CD8-positive, alpha-beta T cell (primary cell): ENCODE measurements at regions of chr7 and their contacts with region 1.

Region 1: DNA sequence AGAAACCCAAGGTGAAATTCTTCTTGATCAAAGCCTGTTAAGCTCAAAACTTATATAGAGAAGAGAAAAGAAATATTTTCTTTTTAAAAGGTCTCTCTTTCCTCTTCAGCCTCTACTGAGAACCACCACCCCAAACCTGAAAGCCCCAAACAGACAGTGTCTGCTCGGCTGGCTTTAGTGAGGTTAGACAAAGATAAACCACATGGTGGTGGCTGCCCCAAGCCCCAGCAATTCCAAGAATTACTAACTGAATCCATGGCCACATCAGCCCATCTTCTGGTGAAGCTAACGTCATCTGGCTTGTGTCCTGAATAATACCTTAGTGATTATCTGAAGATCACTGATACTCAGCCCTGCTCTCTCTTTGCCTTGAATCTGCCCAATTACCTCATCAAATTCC is 275.0 kb downstream of the ELMO1 start:
- DNase-seq: no peak
- ATAC-seq: no peak
- H3K4me3 ChIP-seq: no peak overlapping the region
- H3K4me3 Mint-ChIP-seq: no peak overlapping the region
- H3K27ac ChIP-seq: no peak overlapping the region
- H3K27ac Mint-ChIP-seq: no peak overlapping the region
- H3K4me1 ChIP-seq: no peaks in the 10 kb centered on the region
- H3K4me1 Mint-ChIP-seq: no peaks in the 10 kb centered on the region
- H3K27me3 ChIP-seq: no peaks in the 10 kb centered on the region
- H3K27me3 Mint-ChIP-seq: no peaks in the 10 kb centered on the region
- CTCF ChIP-seq: no peak

Region 2: DNA sequence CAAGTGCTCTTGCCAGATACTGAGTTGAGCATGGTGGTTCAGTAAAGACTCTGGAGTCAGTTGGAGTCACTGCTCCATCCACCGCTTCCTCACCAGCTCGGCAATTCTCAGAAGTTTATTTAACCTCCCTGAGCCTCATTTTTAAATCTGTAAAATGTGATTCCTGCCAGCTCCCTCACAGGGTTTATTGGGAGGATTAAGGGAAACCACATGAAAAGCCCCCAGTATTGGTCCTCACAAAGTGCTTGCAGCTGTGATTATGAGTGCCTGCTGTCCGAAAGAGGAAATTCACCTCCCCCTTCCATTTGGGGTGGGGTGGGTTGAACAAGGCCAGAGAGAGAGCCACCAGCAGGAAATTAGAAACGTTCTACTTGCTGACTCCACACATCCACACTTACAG is 548.4 kb before region 1 on chr7:
- CTCF ChIA-PET with region 1: no interaction called
- POLR2A ChIA-PET with region 1: no interaction called
- intact Hi-C with region 1: loop called in 1 of 2 experiments (anchors 5 kb)
- DNase-seq: no peak
- ATAC-seq: no peak
- H3K4me3 ChIP-seq: no peak overlapping the region
- H3K4me3 Mint-ChIP-seq: no peak overlapping the region
- H3K27ac ChIP-seq: peak overlapping the region in 1 of 2 experiments; percentile 58
- H3K27ac Mint-ChIP-seq: peak overlapping the region; percentile 46
- H3K4me1 ChIP-seq: peaks cover 8% of the 10 kb centered on the region
- H3K4me1 Mint-ChIP-seq: peaks cover 42% of the 10 kb centered on the region
- H3K27me3 ChIP-seq: no peaks in the 10 kb centered on the region
- H3K27me3 Mint-ChIP-seq: no peaks in the 10 kb centered on the region
- CTCF ChIP-seq: no peak

Region 3: DNA sequence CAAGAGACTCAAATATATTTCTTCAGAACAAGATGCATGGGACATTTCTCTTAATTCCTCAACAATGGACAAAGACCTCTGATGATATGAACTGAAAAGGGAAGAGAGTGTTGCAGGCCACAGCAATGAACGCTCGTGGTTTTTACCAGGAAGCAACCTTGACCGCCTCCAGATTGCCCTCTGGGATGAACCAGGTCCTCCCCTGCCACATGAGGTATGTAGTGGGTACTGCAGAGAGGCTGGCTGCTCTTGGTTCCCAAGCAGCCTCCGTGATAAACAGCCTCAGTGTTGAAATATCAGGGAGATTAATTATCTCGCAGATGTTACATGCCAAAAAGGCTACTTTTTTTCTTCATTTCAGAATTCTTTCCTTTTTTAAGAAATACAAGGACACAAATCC is 63.8 kb before region 1 on chr7:
- CTCF ChIA-PET with region 1: no interaction called
- POLR2A ChIA-PET with region 1: interaction called, 3 read pairs
- intact Hi-C with region 1: loop called in 1 of 2 experiments (anchors 10 kb)
- DNase-seq: no peak
- ATAC-seq: no peak
- H3K4me3 ChIP-seq: no peak overlapping the region
- H3K4me3 Mint-ChIP-seq: no peak overlapping the region
- H3K27ac ChIP-seq: no peak overlapping the region
- H3K27ac Mint-ChIP-seq: no peak overlapping the region
- H3K4me1 ChIP-seq: no peaks in the 10 kb centered on the region
- H3K4me1 Mint-ChIP-seq: peaks cover 46% of the 10 kb centered on the region
- H3K27me3 ChIP-seq: no peaks in the 10 kb centered on the region
- H3K27me3 Mint-ChIP-seq: no peaks in the 10 kb centered on the region
- CTCF ChIP-seq: no peak